Activated CD8-positive, alpha-beta T cell treated with anti-CD3 and anti-CD28 coated beads for 36 hours (primary cell): ENCODE measurements at regions of chr21 and their contacts with region 1.

Region 1: GRCh38 chr21:45923146-45923545 is 58.4 kb upstream of the COL6A1 start:
- DNase-seq: peak; percentile 72
- ATAC-seq: peak; percentile 96
- H3K4me3 Mint-ChIP-seq: no peak overlapping the region
- H3K27ac Mint-ChIP-seq: no peak overlapping the region
- H3K4me1 Mint-ChIP-seq: peaks cover 9% of the 10 kb centered on the region
- H3K27me3 Mint-ChIP-seq: no peaks in the 10 kb centered on the region
- CTCF ChIP-seq: peak; percentile 88

Region 2: DNA sequence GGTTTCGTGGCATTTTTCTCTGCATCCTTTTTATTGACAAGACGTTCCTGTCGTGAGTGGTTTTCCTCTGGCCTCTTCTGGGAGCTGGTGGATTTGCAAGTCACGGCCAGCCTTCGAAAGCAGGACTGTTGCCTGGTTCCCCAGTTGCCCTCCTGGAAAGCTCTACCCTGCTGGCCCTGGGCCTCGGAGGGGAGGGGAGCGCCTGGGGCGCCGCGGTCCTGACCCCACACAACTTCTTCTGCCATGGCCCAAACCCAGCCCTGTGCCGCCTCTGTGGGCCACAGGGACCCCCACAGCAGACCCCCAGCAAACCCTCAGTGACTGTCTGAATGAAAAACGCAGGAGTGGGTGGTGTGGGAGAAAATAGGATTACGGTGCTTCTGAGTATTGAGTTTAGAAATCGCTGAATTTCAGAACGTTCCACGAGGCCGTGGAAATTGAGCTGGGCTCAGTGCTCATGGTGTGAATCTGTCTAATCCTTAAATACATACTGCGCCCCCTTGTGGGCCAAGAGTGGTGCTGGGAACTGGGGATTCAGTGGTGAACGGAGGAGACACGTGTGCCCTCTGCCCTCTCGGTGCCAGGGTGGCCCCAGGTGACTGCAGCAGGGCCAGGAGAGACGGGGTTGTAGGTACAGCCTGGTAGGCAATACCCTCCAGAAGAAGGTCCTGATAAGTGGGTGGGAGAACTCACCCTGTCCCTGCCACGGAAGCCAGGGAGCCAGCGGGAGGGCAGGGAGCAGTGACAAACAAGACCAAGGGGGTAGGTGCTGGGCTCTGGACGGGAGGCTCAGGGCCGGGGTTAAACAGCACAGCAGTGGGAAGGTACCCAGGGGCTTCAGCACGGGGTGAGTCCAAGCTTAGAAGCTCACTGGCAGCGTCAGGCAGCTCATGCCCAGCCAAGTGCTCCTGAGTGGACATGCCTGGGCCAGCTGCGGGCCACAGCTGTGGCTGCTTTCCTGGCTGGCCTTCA is 42.8 kb before region 1 on chr21:
- CTCF ChIA-PET with region 1: interaction called, 15 read pairs
- POLR2A ChIA-PET with region 1: no interaction called
- intact Hi-C with region 1: no loop called
- DNase-seq: peak; percentile 92
- ATAC-seq: peak; percentile 95
- H3K4me3 Mint-ChIP-seq: no peak overlapping the region
- H3K27ac Mint-ChIP-seq: peak overlapping the region; percentile 63
- H3K4me1 Mint-ChIP-seq: peaks cover 37% of the 10 kb centered on the region
- H3K27me3 Mint-ChIP-seq: peaks cover 10% of the 10 kb centered on the region
- CTCF ChIP-seq: peak; percentile 79

Region 3: DNA sequence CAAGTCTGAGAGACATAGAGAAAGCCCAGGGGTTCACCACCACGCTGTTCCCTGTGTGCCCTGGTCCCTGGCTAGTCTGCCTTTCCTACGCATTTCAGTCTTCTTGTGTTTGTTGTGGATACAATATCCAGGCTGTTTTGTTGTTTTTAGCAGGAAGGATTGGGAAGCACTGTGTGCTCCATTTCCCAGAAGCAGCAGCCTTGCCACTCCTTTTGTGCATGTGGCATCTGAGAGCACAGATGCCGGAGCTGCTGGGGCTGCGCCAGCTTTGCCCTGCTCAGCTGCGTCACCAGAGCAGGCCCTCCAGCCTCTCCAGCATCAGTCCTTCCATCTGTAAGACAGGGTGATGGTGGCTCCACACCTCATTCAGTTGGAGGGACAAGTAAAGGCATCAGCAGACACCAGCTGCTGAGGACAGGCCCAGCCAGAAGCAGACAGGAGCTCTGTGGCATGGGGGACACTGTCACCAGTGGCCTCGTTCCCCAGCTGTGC is 36.0 kb before region 1 on chr21:
- CTCF ChIA-PET with region 1: interaction called, 12 read pairs
- POLR2A ChIA-PET with region 1: no interaction called
- intact Hi-C with region 1: no loop called
- DNase-seq: no peak
- ATAC-seq: no peak
- H3K4me3 Mint-ChIP-seq: no peak overlapping the region
- H3K27ac Mint-ChIP-seq: peak overlapping the region; percentile 39
- H3K4me1 Mint-ChIP-seq: peaks cover 73% of the 10 kb centered on the region
- H3K27me3 Mint-ChIP-seq: peaks cover 9% of the 10 kb centered on the region
- CTCF ChIP-seq: no peak

Region 4: GRCh38 chr21:46021978-46022544 is 98.9 kb after region 1 on chr21:
- CTCF ChIA-PET with region 1: no interaction called
- POLR2A ChIA-PET with region 1: no interaction called
- intact Hi-C with region 1: no loop called
- DNase-seq: no peak
- ATAC-seq: no peak
- H3K4me3 Mint-ChIP-seq: no peak overlapping the region
- H3K27ac Mint-ChIP-seq: no peak overlapping the region
- H3K4me1 Mint-ChIP-seq: peaks cover 11% of the 10 kb centered on the region
- H3K27me3 Mint-ChIP-seq: peaks cover 38% of the 10 kb centered on the region
- CTCF ChIP-seq: no peak